Cardiac septum (tissue), 1 donor: ENCODE measurements at regions of chr10 and their contacts with region 1.

Region 1: DNA sequence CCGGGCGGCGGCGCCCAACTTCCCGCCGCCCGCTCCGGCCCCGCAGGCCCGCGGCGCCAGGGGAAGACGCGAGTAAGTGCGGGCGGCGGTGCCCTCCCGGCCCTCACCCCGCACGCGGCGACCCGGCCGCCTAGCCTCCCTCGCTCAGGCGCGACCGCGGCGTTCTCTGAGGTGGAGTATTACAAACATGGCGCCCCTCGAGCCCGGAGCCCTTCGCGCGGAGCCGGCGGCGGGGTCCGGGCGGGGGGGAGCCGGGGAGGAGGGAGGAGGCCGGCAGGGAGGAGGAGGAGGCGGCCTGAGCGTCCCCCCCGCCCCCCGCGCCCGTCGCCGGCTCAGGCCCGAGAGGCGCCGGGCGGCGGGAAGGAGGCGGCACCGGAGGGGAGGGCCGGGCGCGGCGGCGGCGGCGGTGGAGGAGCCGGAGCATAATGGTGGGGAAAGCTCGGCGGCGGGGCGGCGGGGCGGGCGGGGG is at the start of gene ZMYND11:
- DNase-seq: peak; percentile 78
- total RNA-seq, gene ZMYND11: 90.6 TPM

Region 2: DNA sequence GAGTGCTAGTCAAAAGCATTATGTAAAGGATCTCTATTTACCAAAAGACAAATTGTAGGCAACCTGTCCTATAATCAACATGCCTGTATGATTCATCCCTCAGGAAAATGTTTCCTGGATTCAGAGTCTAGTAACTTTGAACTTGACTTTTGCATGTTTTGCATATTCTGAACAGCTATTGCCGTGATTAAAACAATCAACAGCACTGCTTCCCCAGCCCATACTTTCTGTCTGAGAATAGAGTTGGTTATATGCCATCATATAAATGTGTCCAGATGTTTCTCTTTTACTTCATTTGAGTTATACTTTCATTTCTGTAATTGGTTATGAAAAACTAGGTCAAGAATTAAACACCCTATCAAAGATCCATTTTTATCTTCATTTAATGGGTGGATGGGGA is 83.6 kb after region 1 on chr10:
- intact Hi-C with region 1: no loop called
- DNase-seq: no peak

Region 3: DNA sequence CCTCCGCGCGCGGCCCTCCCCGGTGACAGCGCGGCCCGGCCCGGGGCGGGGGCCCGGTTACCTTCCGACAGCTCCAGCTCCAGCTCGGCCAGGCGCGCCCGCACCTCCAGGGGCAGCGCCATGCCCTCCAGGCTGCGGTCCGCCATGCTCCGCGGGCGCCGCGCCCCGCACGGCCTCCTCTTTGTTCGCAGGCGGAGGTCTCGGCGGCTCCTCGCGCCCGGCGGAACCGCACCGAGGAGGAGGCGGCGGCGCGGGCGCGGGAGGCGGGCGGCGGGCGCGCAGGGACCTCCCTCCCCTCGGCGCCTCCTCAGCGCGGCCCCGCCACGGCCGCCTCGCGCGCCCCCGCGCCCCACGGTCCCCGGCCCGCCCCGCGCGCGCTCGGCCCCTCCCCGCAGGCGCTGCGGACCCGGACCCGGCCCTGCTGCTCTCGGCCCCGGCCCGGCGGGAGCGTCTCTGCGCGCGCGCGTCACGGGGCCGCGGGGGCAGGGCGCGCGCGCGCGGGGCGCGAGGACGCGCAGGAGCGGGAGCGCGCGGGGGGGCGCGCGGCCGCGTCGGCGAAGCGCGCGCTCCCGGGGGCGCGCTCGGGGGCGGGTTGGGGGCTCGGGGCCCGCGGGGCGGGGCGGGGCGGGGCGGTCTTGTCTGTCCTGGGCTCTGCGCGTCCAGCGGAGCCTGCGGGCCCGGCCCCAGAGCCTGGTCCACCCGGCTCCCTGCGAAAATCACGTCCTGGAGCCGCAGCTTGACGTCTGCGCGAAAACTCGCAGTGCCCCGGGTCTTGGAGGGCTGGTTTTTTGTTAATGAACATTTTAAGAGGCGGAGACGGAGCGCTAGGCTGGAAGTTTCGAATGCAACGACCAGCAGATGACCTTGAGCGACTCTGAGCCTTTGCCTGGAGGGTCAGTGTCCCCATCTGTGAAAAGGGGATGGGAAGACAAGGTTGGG is 554.5 kb after region 1 on chr10 and contains the start of gene DIP2C:
- intact Hi-C with region 1: loop called (anchors 5 kb)
- DNase-seq: no peak
- total RNA-seq, gene DIP2C: 28.8 TPM